Adrenal gland (tissue), 19 donors: ENCODE measurements at regions of chr6 and their contacts with region 1.

Region 1: GRCh38 chr6:169263836-169264608 is 10.4 kb upstream of the THBS2 start:
- DNase-seq: peak; percentile 76 to 94 (median 86)
- H3K4me3 ChIP-seq: no peak overlapping the region
- H3K27ac ChIP-seq: no peak overlapping the region
- H3K4me1 ChIP-seq: peaks cover 0 to 4% of the 10 kb centered on the region in 2 donors
- H3K27me3 ChIP-seq: no peaks in the 10 kb centered on the region
- CTCF ChIP-seq: no peak
- POLR2A ChIP-seq: no peak

Region 2: DNA sequence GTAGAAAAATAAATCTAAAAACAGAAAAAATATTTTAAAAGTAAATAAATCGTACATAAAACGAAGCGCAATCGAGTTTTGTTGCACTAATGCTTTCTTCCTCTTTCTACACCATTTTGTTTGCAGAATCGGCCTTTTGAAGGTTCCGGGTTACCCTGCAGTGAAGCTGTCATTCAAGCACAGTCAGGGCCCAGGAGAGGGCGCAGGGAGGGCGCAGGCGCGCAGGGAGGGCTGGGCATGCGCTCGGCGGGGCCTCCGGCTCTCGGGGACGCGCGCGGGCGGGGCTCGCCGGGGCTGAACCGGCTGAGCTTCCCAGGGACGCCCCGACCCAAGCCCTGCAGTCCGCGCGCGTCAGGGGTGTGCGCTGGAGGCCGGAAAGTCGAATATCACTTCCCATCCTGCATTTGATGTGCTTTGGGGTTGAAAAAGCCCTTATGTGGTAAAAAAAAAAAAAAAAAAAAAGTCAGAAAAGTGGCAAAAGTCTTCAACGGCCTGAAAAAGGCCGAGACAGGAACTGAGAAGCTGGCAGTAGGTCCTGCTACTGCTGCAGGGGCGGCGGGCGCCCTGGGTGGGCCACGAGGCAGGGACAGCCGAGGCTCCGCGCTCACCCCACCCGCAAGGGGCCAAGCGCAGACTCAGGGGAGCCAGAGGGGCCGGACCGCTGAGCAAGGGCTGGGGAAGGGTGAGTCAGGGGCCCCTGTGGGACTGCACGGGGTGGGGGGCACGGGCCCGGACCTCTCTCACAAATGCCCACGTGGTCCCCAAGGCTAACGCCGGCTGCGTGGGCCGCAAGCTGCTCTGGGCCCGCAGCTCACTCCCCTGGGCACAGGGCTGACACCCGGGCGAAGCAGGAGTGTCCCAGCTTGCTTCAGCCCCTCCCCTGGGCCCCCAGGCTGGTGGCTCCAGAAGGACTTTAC is 50.9 kb before region 1 on chr6:
- intact Hi-C with region 1: loop called in 1 of 2 experiments (anchors 10 kb)
- DNase-seq: peak; percentile 92 to 96 (median 94)
- H3K4me3 ChIP-seq: peak overlapping the region in 1 of 4 donors; percentile 33
- H3K27ac ChIP-seq: peak overlapping the region; percentile 77 to 97 (median 95)
- H3K4me1 ChIP-seq: peaks cover 22 to 31% of the 10 kb centered on the region in 2 donors
- H3K27me3 ChIP-seq: no peaks in the 10 kb centered on the region
- CTCF ChIP-seq: peak in 5 of 6 experiments; percentile 17 to 58 (median 44)
- POLR2A ChIP-seq: peak in 1 of 2 donors; percentile 69